ENCODE measurements at regions of chr19 and their contacts with region 1.

Region 1: DNA sequence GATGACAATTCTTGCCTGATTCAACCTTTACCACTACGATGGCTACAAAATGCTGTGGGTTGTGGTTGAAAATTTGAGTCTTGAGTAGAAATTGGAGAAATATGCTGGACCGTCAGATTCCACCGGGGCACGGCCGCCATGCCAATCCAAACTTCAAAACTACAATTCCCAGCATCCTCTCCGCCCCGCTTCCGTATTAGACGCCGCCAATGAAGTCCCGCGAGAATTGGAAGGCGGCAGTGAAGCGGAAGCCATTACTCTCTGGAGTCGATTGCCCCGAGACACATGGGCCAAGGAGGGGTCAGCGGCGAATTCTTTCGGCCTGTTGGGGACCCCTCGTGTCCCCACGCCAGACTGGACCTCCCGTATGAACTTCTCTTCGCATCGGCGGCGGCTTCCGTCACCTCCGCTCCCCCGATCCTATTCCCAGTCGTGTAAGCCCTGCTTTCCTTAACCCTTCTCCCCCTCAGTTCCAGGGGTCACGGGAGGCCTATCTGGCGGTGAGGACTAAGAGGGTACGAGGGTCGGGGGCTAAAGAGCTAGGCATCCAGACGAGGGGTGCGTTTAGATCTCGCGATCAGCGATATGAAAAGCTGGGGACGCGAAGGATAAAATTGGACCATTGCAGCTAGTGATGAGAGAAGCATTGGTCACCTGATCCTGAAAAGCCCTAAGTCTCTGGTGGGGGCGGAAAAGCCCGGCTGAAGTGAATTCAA is at the start of gene ZNF317:
- DNase-seq: peak; percentile 88
- H3K4me3 Mint-ChIP-seq: peak within 1 kb of the TSS; percentile 95
- H3K27ac Mint-ChIP-seq: peak within 1 kb of the TSS; percentile 94
- H3K4me1 Mint-ChIP-seq: peaks cover 33% of the 10 kb centered on the region
- H3K27me3 Mint-ChIP-seq: no peaks in the 10 kb centered on the region
- total RNA-seq, gene ZNF317: 50.7 and 53.3 TPM in 2 replicates

Region 2: DNA sequence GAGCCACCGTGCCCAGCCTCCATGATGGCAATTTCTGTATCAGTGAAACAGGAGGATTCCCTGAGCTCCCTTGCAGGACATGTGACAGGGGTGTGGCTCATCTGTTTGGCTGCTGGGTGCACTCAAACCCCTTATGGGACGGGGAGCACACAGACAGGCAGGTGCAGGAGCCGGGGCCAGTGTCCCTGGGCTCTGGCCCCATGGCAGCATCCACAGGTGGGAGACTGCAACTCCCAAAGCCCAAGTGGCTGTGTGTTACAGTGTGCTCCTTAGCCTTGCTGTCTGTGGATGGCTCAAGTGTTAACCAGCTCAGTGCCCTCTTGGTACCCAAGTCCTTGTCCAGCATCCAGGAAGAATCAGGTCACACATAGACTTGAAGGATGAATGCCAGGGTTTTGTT is 293.5 kb before region 1 on chr19:
- intact Hi-C with region 1: no loop called
- DNase-seq: no peak
- H3K4me3 Mint-ChIP-seq: no peak overlapping the region
- H3K27ac Mint-ChIP-seq: no peak overlapping the region
- H3K4me1 Mint-ChIP-seq: no peaks in the 10 kb centered on the region
- H3K27me3 Mint-ChIP-seq: peaks cover 1% of the 10 kb centered on the region

Region 3: DNA sequence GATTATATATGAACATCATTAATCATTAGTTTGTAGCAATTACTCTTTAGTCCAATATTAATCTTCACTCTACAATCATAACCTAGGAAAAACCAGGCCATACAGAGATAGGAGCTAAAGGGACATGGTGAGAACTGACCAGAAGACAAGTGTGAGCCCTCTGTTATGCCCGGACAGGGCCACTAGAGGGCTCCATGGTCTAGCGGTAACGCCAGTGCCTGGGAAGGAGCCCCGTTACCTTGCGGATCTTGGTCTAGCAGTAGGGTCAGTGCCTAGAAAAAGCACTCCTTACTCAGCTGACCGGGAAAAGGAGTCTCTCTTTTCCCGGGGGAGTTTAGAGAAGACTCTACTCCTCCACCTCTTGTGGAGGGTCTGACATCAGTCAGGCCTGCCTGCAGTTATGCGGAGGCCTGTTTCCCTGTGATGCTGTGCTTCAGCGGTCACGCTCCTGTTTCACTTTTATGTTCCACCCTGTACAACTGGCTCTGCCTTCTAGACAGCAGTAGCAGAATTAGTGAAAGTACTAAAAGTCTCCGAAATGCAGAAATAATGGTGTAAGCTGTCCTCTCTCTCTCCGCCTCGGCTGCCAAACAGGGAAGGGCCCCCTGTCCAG is 65.3 kb after region 1 on chr19:
- intact Hi-C with region 1: loop called (anchors 1 kb)
- DNase-seq: peak; percentile 52
- H3K4me3 Mint-ChIP-seq: peak overlapping the region; percentile 37
- H3K27ac Mint-ChIP-seq: no peak overlapping the region
- H3K4me1 Mint-ChIP-seq: peaks cover 6% of the 10 kb centered on the region
- H3K27me3 Mint-ChIP-seq: no peaks in the 10 kb centered on the region

Region 4: GRCh38 chr19:9538183-9539058 is 398.1 kb after region 1 on chr19 and contains the start of gene ZNF426:
- intact Hi-C with region 1: loop called (anchors 1 kb)
- DNase-seq: peak; percentile 76
- H3K4me3 Mint-ChIP-seq: peak within 1 kb of the TSS; percentile 97
- H3K27ac Mint-ChIP-seq: peak within 1 kb of the TSS; percentile 98
- H3K4me1 Mint-ChIP-seq: peaks cover 5% of the 10 kb centered on the region
- H3K27me3 Mint-ChIP-seq: no peaks in the 10 kb centered on the region
- total RNA-seq, gene ZNF426: 10.2 and 10.3 TPM in 2 replicates

Region 5: GRCh38 chr19:9627856-9628255 is 487.5 kb after region 1 on chr19:
- intact Hi-C with region 1: no loop called
- DNase-seq: no peak
- H3K4me3 Mint-ChIP-seq: no peak overlapping the region
- H3K27ac Mint-ChIP-seq: no peak overlapping the region
- H3K4me1 Mint-ChIP-seq: peaks cover 7% of the 10 kb centered on the region
- H3K27me3 Mint-ChIP-seq: no peaks in the 10 kb centered on the region

Region 6: GRCh38 chr19:9818734-9819589 is 678.6 kb after region 1 on chr19 and contains the start of gene FBXL12:
- intact Hi-C with region 1: loop called (anchors 1 kb)
- DNase-seq: peak; percentile 100
- H3K4me3 Mint-ChIP-seq: peak within 1 kb of the TSS; percentile 90
- H3K27ac Mint-ChIP-seq: peak within 1 kb of the TSS; percentile 87
- H3K4me1 Mint-ChIP-seq: peaks cover 27% of the 10 kb centered on the region
- H3K27me3 Mint-ChIP-seq: no peaks in the 10 kb centered on the region
- total RNA-seq, gene FBXL12: 19.4 and 20.7 TPM in 2 replicates